Caco-2 (cell line): ENCODE measurements at regions of chr4 and their contacts with region 1.

Region 1: GRCh38 chr4:4334798-4335520 is 44.9 kb downstream of the ZBTB49 start:
- DNase-seq: peak; percentile 75 to 82
- H3K4me3 ChIP-seq: 0 out of 2 replicates have a peak overlapping the region, but pooled peaks have one; percentile 6
- H3K4me3 Mint-ChIP-seq: peak overlapping the region; percentile 59
- H3K27ac Mint-ChIP-seq: no peak overlapping the region
- H3K4me1 ChIP-seq: no peaks in the 10 kb centered on the region
- H3K4me1 Mint-ChIP-seq: no peaks in the 10 kb centered on the region
- H3K27me3 ChIP-seq: no peaks in the 10 kb centered on the region
- H3K27me3 Mint-ChIP-seq: peaks cover 4% of the 10 kb centered on the region
- CTCF ChIP-seq: peak; percentile 84 to 87

Region 2: GRCh38 chr4:4248029-4248884 is 86.7 kb before region 1 on chr4 and contains the start of gene TMEM128:
- CTCF ChIA-PET with region 1: interaction called, 4 read pairs
- POLR2A ChIA-PET with region 1: no interaction called
- intact Hi-C with region 1: loop called (anchors 1 kb)
- DNase-seq: peak; percentile 90
- H3K4me3 ChIP-seq: peak within 1 kb of the TSS; percentile 91
- H3K4me3 Mint-ChIP-seq: peak within 1 kb of the TSS; percentile 95
- H3K27ac Mint-ChIP-seq: peak within 1 kb of the TSS; percentile 97
- H3K4me1 ChIP-seq: peaks cover 5% of the 10 kb centered on the region
- H3K4me1 Mint-ChIP-seq: peaks cover 13% of the 10 kb centered on the region
- H3K27me3 ChIP-seq: no peaks in the 10 kb centered on the region
- H3K27me3 Mint-ChIP-seq: no peaks in the 10 kb centered on the region
- CTCF ChIP-seq: peak in 1 of 2 experiments; percentile 10
- total RNA-seq, gene TMEM128: 14.4 and 19.0 TPM in 2 replicates

Region 3: DNA sequence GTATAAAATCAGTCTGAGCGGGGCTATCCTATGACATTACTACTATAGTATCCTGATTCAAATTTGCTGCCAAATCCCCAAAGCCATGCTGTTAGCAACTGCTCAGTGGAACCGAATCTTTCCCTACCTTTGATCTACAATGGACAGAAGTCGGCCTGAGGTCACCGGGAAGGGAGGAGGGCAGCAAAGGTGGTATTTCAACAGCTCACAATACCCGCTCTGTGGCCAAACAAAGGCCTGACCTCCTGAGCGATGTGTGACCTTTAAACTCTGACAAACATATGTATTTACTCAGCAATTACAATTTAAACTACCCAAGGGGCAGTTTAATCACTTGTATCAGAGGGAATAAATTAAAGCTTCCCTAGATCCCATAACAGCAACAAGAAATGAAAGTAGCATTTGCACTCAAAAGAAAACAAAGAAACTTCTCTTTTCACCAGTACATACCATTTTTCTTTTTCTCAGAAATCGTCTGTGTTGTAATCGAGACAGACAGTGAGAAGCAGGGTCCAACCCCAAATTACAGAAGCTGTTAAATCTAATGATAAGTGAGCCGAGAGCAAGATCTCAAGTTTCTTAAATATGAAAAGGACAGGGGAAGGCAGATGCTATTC is 75.4 kb before region 1 on chr4:
- CTCF ChIA-PET with region 1: interaction called, 7 read pairs
- POLR2A ChIA-PET with region 1: no interaction called
- intact Hi-C with region 1: loop called (anchors 1 kb)
- DNase-seq: peak; percentile 59 to 65
- H3K4me3 ChIP-seq: no peak overlapping the region
- H3K4me3 Mint-ChIP-seq: peak overlapping the region; percentile 44
- H3K27ac Mint-ChIP-seq: peak overlapping the region; percentile 32
- H3K4me1 ChIP-seq: peaks cover 15% of the 10 kb centered on the region
- H3K4me1 Mint-ChIP-seq: peaks cover 6% of the 10 kb centered on the region
- H3K27me3 ChIP-seq: no peaks in the 10 kb centered on the region
- H3K27me3 Mint-ChIP-seq: no peaks in the 10 kb centered on the region
- CTCF ChIP-seq: no peak